CD4-positive, alpha-beta memory T cell (primary cell): ENCODE measurements at regions of chr20 and their contacts with region 1.

Region 1: GRCh38 chr20:63627129-63627750 is 339 bp upstream of the GMEB2 start:
- DNase-seq: peak; percentile 92 to 99 (median 96)
- H3K4me3 ChIP-seq: peak overlapping the region; percentile 91 to 95
- H3K4me3 Mint-ChIP-seq: peak overlapping the region; percentile 94 to 99 (median 96)
- H3K27ac ChIP-seq: peak overlapping the region; percentile 86
- H3K27ac Mint-ChIP-seq: peak overlapping the region; percentile 57 to 96 (median 90)
- H3K4me1 ChIP-seq: peaks cover 41% of the 10 kb centered on the region
- H3K4me1 Mint-ChIP-seq: peaks cover 19 to 54% (median 37%) of the 10 kb centered on the region in 4 donors
- H3K27me3 ChIP-seq: no peaks in the 10 kb centered on the region
- H3K27me3 Mint-ChIP-seq: no peaks in the 10 kb centered on the region

Region 2: GRCh38 chr20:63553227-63553932 is 73.9 kb before region 1 on chr20:
- CTCF ChIA-PET with region 1: interaction called, 3 read pairs
- POLR2A ChIA-PET with region 1: interaction called, 6 read pairs
- intact Hi-C with region 1: loop called (anchors 5 kb)
- DNase-seq: peak; percentile 87 to 93 (median 89)
- H3K4me3 ChIP-seq: peak overlapping the region; percentile 23 to 66
- H3K4me3 Mint-ChIP-seq: peak overlapping the region; percentile 68 to 92 (median 76)
- H3K27ac ChIP-seq: peak overlapping the region; percentile 69
- H3K27ac Mint-ChIP-seq: peak overlapping the region; percentile 93 to 98 (median 97)
- H3K4me1 ChIP-seq: peaks cover 22% of the 10 kb centered on the region
- H3K4me1 Mint-ChIP-seq: peaks cover 5 to 27% (median 14%) of the 10 kb centered on the region in 4 donors
- H3K27me3 ChIP-seq: no peaks in the 10 kb centered on the region
- H3K27me3 Mint-ChIP-seq: peaks cover 0 to 6% of the 10 kb centered on the region in 2 donors

Region 3: GRCh38 chr20:63567386-63568169 is 59.7 kb before region 1 on chr20:
- CTCF ChIA-PET with region 1: no interaction called
- POLR2A ChIA-PET with region 1: interaction called, 12 read pairs
- intact Hi-C with region 1: no loop called
- DNase-seq: peak; percentile 39 to 71 (median 57)
- H3K4me3 ChIP-seq: peak overlapping the region; percentile 42 to 68
- H3K4me3 Mint-ChIP-seq: peak overlapping the region; percentile 78 to 92 (median 84)
- H3K27ac ChIP-seq: peak overlapping the region; percentile 24
- H3K27ac Mint-ChIP-seq: peak overlapping the region in 5 of 7 donors; percentile 57 to 87 (median 60)
- H3K4me1 ChIP-seq: peaks cover 28% of the 10 kb centered on the region
- H3K4me1 Mint-ChIP-seq: peaks cover 6 to 31% (median 18%) of the 10 kb centered on the region in 4 donors
- H3K27me3 ChIP-seq: no peaks in the 10 kb centered on the region
- H3K27me3 Mint-ChIP-seq: no peaks in the 10 kb centered on the region

Region 4: GRCh38 chr20:63612276-63612928 is 14.8 kb before region 1 on chr20:
- CTCF ChIA-PET with region 1: interaction called, 5 read pairs
- POLR2A ChIA-PET with region 1: interaction called, 13 read pairs
- intact Hi-C with region 1: no loop called
- DNase-seq: no peak
- H3K4me3 ChIP-seq: no peak overlapping the region
- H3K4me3 Mint-ChIP-seq: no peak overlapping the region
- H3K27ac ChIP-seq: no peak overlapping the region
- H3K27ac Mint-ChIP-seq: no peak overlapping the region
- H3K4me1 ChIP-seq: no peaks in the 10 kb centered on the region
- H3K4me1 Mint-ChIP-seq: peaks cover 0 to 3% (median 2%) of the 10 kb centered on the region in 4 donors
- H3K27me3 ChIP-seq: no peaks in the 10 kb centered on the region
- H3K27me3 Mint-ChIP-seq: no peaks in the 10 kb centered on the region